ENCODE measurements at regions of chr11 and their contacts with region 1.

Region 1: GRCh38 chr11:48109046-48109666 is 107.5 kb upstream of the OR4B1 start:
- DNase-seq: no peak
- H3K4me3 ChIP-seq: peak overlapping the region; percentile 43
- H3K27ac ChIP-seq: peak overlapping the region; percentile 44
- H3K27me3 ChIP-seq: no peaks in the 10 kb centered on the region
- CTCF ChIP-seq: peak; percentile 37

Region 2: GRCh38 chr11:47858169-47858543 is 251.0 kb before region 1 on chr11:
- in situ Hi-C with region 1: no loop called
- DNase-seq: no peak
- H3K4me3 ChIP-seq: no peak overlapping the region
- H3K27ac ChIP-seq: no peak overlapping the region
- H3K27me3 ChIP-seq: no peaks in the 10 kb centered on the region
- CTCF ChIP-seq: no peak

Region 3: DNA sequence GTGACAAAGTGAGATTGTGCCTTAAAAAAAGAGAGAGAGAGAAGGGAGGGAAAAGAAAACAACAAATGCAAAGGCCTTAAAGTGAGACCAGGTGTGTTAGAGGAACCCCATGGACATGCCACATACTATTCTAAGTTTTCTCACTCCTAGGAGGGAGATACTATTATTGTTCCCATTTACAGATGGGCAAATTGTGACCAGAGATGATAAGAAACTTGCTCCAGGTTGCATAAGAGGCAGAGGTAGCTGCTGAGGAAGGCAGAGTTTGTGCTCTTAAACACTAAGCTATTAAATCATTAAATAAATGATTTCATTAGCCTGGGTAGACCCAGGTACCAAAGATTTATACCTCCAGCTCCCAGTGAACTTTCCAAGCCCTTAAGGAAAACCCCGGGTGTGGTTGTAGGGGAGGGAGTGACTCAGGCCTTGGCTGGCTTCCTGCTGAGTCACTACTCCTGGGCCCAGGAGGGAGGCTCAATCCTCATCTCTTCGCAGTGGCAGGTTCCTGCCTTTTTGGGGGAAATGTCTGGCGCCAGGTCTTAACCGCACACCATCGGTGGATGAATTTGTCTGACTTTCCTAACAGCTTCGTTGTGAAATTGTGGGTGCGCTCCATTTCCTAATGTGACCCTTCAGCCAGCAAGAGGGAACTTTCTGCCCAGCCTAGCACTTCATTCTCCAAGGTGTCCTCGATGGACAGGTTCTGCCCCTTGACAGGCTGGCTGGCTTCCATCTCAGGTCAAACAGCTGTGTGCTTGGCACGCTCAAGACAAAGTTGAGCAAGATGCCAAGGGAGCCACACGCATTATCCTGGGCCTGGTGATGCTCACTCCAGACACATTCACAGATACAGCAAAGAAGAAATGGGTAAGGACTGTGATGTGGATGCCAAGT is 162.2 kb before region 1 on chr11:
- in situ Hi-C with region 1: loop called (anchors 25 kb)
- DNase-seq: peak; percentile 89
- H3K4me3 ChIP-seq: no peak overlapping the region
- H3K27ac ChIP-seq: peak overlapping the region; percentile 65
- H3K27me3 ChIP-seq: no peaks in the 10 kb centered on the region
- CTCF ChIP-seq: no peak